ENCODE measurements at regions of chr10 and their contacts with region 1.

Region 1: DNA sequence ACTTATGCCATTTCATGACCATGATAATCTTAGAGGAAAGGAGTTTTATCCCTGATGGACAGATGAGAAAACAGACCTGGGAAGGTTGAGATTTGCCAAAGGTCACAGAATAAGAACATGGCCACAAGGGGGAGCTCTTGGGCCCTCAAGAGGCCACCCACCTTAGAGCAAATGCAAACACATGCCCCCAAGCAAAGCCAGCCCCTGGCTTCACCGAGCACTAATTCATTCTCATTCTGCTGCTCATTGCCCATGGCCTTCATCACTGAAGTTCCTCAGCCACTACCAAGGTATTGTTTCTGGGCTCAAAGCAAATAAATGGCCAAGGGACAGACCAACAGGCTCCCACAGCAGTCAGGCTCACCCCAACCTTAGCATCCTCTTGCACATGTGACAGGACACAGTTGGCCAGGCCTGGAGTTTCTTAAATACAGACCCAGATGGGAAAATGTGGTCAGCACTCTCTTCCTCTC is 44.2 kb downstream of the PDLIM1 start:
- DNase-seq: no peak
- H3K4me3 ChIP-seq: no peak overlapping the region
- CTCF ChIP-seq: peak; percentile 60

Region 2: GRCh38 chr10:94630017-94630688 is 616.5 kb before region 1 on chr10:
- CTCF ChIA-PET with region 1: interaction called, 10 read pairs
- POLR2A ChIA-PET with region 1: no interaction called
- DNase-seq: no peak
- H3K4me3 ChIP-seq: no peak overlapping the region
- CTCF ChIP-seq: peak; percentile 40

Region 3: DNA sequence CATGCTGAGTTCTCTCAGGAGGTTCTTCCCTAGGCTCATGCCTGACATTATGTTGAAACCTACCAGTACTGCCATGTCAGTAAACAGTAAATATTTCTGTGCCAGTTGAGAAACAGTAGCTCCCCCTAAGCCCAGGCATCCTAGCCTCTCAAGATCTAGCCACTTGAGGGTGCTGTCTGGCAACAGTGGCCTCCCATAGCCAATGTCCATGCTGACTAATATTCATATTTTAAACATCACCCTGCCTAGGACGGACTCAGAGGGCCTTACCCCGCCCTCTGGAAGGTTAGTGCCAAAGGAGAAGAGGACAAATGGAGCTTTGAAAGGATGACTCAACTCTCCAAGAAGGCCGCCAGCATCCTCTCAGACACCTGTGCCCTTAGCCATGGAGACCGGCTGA is 44.9 kb before region 1 on chr10:
- CTCF ChIA-PET with region 1: interaction called, 84 read pairs
- POLR2A ChIA-PET with region 1: no interaction called
- DNase-seq: no peak
- H3K4me3 ChIP-seq: no peak overlapping the region
- CTCF ChIP-seq: peak; percentile 29

Region 4: GRCh38 chr10:95229724-95230627 is 16.6 kb before region 1 on chr10:
- CTCF ChIA-PET with region 1: interaction called, 63 read pairs
- POLR2A ChIA-PET with region 1: no interaction called
- DNase-seq: peak; percentile 97
- H3K4me3 ChIP-seq: no peak overlapping the region
- CTCF ChIP-seq: no peak

Region 5: GRCh38 chr10:95266674-95267095 is 20.1 kb after region 1 on chr10:
- CTCF ChIA-PET with region 1: interaction called, 25 read pairs
- POLR2A ChIA-PET with region 1: no interaction called
- DNase-seq: peak; percentile 85
- H3K4me3 ChIP-seq: no peak overlapping the region
- CTCF ChIP-seq: no peak

Region 6: GRCh38 chr10:95350219-95350829 is 103.7 kb after region 1 on chr10:
- CTCF ChIA-PET with region 1: interaction called, 601 read pairs
- POLR2A ChIA-PET with region 1: no interaction called
- DNase-seq: no peak
- H3K4me3 ChIP-seq: no peak overlapping the region
- CTCF ChIP-seq: no peak